MCF 10A (cell line): ENCODE measurements at regions of chr3 and their contacts with region 1.

Region 1: GRCh38 chr3:51682079-51682478 is 11.0 kb downstream of the TEX264 start:
- DNase-seq: peak; percentile 91
- H3K4me3 Mint-ChIP-seq: no peak overlapping the region
- H3K27ac Mint-ChIP-seq: peak overlapping the region; percentile 35
- H3K4me1 Mint-ChIP-seq: peaks cover 42% of the 10 kb centered on the region
- H3K27me3 Mint-ChIP-seq: no peaks in the 10 kb centered on the region
- CTCF ChIP-seq: peak; percentile 65

Region 2: GRCh38 chr3:51511000-51511399 is 171.1 kb before region 1 on chr3:
- CTCF ChIA-PET with region 1: interaction called, 12 read pairs
- POLR2A ChIA-PET with region 1: interaction called, 3 read pairs
- intact Hi-C with region 1: no loop called
- DNase-seq: no peak
- H3K4me3 Mint-ChIP-seq: no peak overlapping the region
- H3K27ac Mint-ChIP-seq: no peak overlapping the region
- H3K4me1 Mint-ChIP-seq: no peaks in the 10 kb centered on the region
- H3K27me3 Mint-ChIP-seq: no peaks in the 10 kb centered on the region
- CTCF ChIP-seq: no peak

Region 3: DNA sequence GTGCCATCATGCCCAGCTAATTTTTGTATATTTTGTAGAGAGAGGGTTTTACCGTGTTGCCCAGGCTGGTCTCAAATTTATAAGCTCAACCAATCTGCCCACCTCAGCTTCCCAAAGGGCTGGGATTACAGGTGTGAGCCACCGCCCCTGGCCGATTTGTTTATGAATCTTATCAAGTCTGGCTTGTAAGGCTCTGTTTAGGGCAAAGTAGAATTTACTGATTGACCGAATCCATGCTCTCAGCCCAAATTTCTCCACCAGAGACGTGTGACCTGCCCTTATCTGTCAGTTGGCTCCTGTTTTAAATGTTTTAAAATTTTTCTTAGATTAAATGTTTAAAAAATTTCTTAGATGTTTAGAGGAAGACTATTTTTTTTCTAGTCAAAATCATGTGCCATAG is 124.1 kb before region 1 on chr3:
- CTCF ChIA-PET with region 1: no interaction called
- POLR2A ChIA-PET with region 1: no interaction called
- intact Hi-C with region 1: no loop called
- DNase-seq: no peak
- H3K4me3 Mint-ChIP-seq: no peak overlapping the region
- H3K27ac Mint-ChIP-seq: no peak overlapping the region
- H3K4me1 Mint-ChIP-seq: peaks cover 9% of the 10 kb centered on the region
- H3K27me3 Mint-ChIP-seq: no peaks in the 10 kb centered on the region
- CTCF ChIP-seq: no peak

Region 4: DNA sequence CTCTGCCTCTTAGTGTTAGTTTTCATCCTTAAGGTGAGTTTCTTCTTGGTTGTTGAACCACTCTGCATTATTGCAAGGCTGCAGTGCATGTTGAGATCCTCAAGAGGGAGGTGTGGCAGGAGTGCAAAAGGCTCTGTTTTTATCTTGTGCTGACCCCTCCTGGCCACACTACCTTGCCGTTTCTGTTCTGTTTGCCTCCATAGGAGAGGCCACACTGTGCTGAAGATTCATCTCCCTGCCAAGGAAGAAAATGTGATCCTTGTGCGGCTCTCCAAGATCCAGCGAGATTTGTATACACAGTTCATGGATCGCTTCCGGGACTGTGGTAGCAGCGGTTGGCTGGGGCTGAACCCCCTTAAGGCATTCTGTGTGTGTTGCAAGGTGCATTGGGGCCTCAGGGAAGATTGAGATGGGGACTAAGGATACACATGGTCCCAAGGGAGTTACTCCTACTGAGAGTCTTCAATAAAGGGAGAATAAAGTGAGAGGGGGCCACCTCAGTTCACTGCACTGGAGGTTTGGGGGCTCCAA is 44.1 kb before region 1 on chr3:
- CTCF ChIA-PET with region 1: interaction called, 45 read pairs
- POLR2A ChIA-PET with region 1: interaction called, 3 read pairs
- intact Hi-C with region 1: loop called (anchors 1 kb)
- DNase-seq: peak; percentile 72
- H3K4me3 Mint-ChIP-seq: no peak overlapping the region
- H3K27ac Mint-ChIP-seq: no peak overlapping the region
- H3K4me1 Mint-ChIP-seq: no peaks in the 10 kb centered on the region
- H3K27me3 Mint-ChIP-seq: no peaks in the 10 kb centered on the region
- CTCF ChIP-seq: peak; percentile 84

Region 5: DNA sequence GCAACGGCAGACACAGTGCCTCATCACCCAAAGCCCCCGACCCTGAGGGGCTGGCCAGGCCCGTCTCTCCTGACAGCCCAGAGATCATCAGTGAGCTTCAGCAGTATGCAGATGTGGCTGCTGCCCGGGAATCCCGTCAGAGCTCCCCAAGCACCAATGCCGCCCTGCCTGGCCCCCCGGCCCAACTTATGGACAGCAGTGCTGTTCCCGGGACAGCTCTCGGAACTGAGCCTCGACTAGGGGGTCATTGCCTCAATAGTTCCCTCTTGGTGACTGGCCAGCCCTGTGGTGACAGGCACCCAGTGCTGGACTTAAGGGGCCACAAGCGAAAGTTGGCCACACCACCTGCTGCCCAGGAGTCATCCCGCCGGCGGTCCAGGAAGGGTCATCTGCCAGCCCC is 19.6 kb before region 1 on chr3:
- CTCF ChIA-PET with region 1: interaction called, 18 read pairs
- POLR2A ChIA-PET with region 1: no interaction called
- intact Hi-C with region 1: no loop called
- DNase-seq: no peak
- H3K4me3 Mint-ChIP-seq: no peak overlapping the region
- H3K27ac Mint-ChIP-seq: no peak overlapping the region
- H3K4me1 Mint-ChIP-seq: no peaks in the 10 kb centered on the region
- H3K27me3 Mint-ChIP-seq: no peaks in the 10 kb centered on the region
- CTCF ChIP-seq: no peak

Region 6: DNA sequence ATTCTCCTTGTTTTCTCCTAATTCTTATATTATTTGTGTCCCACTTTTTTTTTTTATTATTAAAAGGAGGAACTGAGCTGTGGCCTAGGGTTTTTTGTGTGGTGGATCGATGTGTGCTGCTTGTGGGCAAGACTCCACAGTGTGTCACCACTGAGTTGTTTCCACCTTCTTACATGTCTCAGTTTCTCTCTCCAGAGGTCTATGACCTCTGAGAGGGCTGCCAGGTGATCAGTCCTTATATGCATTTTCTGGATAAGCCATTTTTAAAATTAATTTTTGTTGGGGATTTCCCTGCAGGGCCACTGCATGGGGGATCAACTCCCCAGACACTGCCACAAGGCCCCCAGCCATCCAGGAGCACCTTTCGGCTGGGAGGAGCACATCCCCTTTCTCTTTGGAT is 69.2 kb after region 1 on chr3:
- CTCF ChIA-PET with region 1: no interaction called
- POLR2A ChIA-PET with region 1: no interaction called
- intact Hi-C with region 1: no loop called
- DNase-seq: no peak
- H3K4me3 Mint-ChIP-seq: no peak overlapping the region
- H3K27ac Mint-ChIP-seq: no peak overlapping the region
- H3K4me1 Mint-ChIP-seq: no peaks in the 10 kb centered on the region
- H3K27me3 Mint-ChIP-seq: peaks cover 20% of the 10 kb centered on the region
- CTCF ChIP-seq: no peak